Esophagus muscularis mucosa (tissue), 4 donors: ENCODE measurements at regions of chrX and their contacts with region 1.

Region 1: DNA sequence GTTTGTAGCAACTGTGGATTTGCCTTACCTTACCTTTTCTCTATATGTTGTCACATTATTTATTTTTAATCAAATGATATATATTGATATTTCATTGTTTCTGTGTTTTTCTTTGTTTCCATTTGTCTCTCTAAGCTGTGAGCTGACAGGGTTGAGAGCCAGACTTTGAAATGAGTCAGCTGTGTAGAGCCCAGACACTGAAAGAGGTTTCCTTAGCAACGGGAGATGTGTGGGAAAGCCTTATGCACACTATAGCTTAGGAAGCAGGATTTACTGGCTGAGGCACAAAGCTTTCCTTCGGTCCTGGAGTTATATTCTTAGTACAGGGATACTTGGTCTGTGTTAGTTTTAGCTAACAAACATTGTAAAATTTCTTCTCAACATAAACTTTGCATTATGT is 192.2 kb downstream of the FGF13 start:
- DNase-seq: no peak
- H3K4me3 ChIP-seq: no peak overlapping the region
- H3K27ac ChIP-seq: no peak overlapping the region
- H3K4me1 ChIP-seq: no peaks in the 10 kb centered on the region
- H3K27me3 ChIP-seq: no peaks in the 10 kb centered on the region
- CTCF ChIP-seq: no peak
- EP300 ChIP-seq: no peak
- POLR2A ChIP-seq: no peak

Region 2: DNA sequence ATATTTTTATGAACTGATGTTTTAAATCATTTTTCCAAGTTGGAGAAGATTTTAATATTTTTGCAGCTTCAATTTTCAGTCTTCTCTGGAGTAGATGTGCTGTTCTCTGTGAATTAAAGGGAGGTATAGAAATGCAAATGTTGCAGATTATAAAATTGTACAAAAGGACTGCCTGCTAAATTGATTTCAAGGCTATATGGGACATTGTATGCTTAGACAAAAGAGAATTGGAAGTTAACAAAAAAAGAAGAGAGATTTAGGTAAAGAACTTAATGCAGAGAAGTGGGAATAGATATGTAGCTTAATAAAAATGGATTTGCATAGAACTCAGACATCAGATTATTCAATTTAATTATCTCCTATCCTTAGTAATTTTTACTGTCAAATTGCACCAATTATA is 550.1 kb before region 1 on chrX:
- intact Hi-C with region 1: no loop called
- DNase-seq: no peak
- H3K4me3 ChIP-seq: no peak overlapping the region
- H3K27ac ChIP-seq: no peak overlapping the region
- H3K4me1 ChIP-seq: no peaks in the 10 kb centered on the region
- H3K27me3 ChIP-seq: peaks cover 0 to 7% (median 0%) of the 10 kb centered on the region in 4 donors
- CTCF ChIP-seq: no peak
- EP300 ChIP-seq: no peak
- POLR2A ChIP-seq: no peak

Region 3: DNA sequence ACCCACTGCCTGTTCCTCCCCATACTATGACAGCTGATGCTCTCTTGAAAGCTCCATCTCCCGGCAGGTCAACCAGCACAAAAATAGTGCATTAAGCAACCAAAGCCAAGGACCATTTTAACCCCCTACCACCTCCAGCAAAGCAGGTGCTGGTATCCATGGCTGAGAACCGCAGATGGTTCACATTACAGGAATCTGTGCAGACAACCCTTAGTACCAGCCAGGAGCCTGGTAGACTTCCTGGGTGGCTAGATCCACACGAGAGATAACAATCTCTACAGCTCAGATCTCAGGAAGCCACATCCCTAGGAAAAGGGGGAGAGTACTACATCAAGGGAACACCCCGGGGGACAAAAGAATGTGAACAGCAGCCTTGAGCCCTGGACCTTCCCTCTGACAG is 55.8 kb before region 1 on chrX:
- intact Hi-C with region 1: loop called (anchors 10 kb)
- DNase-seq: no peak
- H3K4me3 ChIP-seq: no peak overlapping the region
- H3K27ac ChIP-seq: no peak overlapping the region
- H3K4me1 ChIP-seq: no peaks in the 10 kb centered on the region
- H3K27me3 ChIP-seq: no peaks in the 10 kb centered on the region
- CTCF ChIP-seq: no peak
- EP300 ChIP-seq: no peak
- POLR2A ChIP-seq: no peak